ENCODE measurements at regions of chr6 and their contacts with region 1.

Region 1: GRCh38 chr6:109373762-109374161 is 8.5 kb downstream of the CD164 start:
- DNase-seq: peak; percentile 36
- CTCF ChIP-seq: no peak

Region 2: GRCh38 chr6:109362102-109362884 is 11.5 kb before region 1 on chr6:
- CTCF ChIA-PET with region 1: interaction called, 24 read pairs
- POLR2A ChIA-PET with region 1: interaction called, 5 read pairs
- DNase-seq: no peak
- CTCF ChIP-seq: no peak